ENCODE measurements at regions of chr7 and their contacts with region 1.

Region 1: GRCh38 chr7:5083311-5083711 is 37.7 kb downstream of the RBAK start:
- DNase-seq: no peak
- ATAC-seq: no peak
- H3K4me3 ChIP-seq: no peak overlapping the region
- H3K27ac ChIP-seq: no peak overlapping the region
- H3K4me1 ChIP-seq: no peaks in the 10 kb centered on the region
- H3K27me3 ChIP-seq: peaks cover 0 to 6% (median 4%) of the 10 kb centered on the region in 3 donors
- CTCF ChIP-seq: no peak
- POLR2A ChIP-seq: no peak

Region 2: DNA sequence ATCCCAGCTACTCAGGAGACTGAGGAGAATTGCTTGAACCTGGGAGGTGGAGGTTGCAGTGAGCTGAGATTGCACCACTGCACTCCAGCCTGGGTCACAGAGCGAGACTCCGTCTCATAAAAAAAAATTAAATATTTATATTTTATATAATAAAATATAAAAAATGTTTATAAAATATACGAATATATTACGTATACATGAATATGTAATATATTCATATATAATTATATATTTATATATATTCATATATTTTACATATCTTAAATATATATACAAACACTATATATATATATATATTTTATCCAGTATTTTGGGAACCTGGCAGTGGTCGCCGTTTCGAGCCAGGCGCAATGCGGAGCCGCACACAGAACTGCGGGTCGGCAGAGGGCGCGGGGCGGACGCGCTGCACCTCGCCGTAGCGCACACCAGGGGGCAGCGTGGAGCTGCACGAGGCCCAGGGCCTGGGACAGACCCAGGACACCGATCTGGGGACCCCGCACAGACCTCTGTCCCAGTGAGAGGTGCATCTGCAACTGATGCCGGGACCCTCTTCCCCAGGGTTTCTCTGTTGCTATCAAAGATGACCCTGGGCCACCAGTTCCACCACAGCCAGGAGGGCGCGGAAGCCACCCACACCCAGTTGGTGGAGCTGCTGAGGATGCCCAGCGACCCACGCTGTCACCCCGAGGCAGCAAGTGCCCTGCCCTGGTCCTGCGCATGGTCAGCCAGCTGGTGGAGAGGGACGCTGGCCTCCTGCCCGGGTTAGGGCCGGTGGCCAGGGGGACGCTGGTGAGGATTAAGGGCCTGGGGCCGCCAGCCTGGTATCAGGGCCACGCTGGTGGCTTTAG is 285.2 kb before region 1 on chr7:
- in situ Hi-C with region 1: loop called in 1 of 4 experiments (anchors 10 kb)
- intact Hi-C with region 1: loop called (anchors 10 kb)
- DNase-seq: no peak
- ATAC-seq: peak; percentile 62 to 73
- H3K4me3 ChIP-seq: no peak overlapping the region
- H3K27ac ChIP-seq: no peak overlapping the region
- H3K4me1 ChIP-seq: peaks cover 0 to 9% of the 10 kb centered on the region in 2 donors
- H3K27me3 ChIP-seq: no peaks in the 10 kb centered on the region
- CTCF ChIP-seq: peak; percentile 54 to 88 (median 83)
- POLR2A ChIP-seq: no peak

Region 3: GRCh38 chr7:4809091-4809591 is 274.2 kb before region 1 on chr7:
- in situ Hi-C with region 1: loop called in 1 of 4 experiments (anchors 10 kb)
- intact Hi-C with region 1: no loop called
- DNase-seq: no peak
- ATAC-seq: peak; percentile 33
- H3K4me3 ChIP-seq: peak overlapping the region in 1 of 4 donors; percentile 20
- H3K27ac ChIP-seq: peak overlapping the region; percentile 45 to 67 (median 62)
- H3K4me1 ChIP-seq: no peaks in the 10 kb centered on the region
- H3K27me3 ChIP-seq: no peaks in the 10 kb centered on the region
- CTCF ChIP-seq: no peak
- POLR2A ChIP-seq: no peak

Region 4: GRCh38 chr7:4958477-4959301 is 124.6 kb before region 1 on chr7 and contains the start of gene MMD2:
- in situ Hi-C with region 1: no loop called
- intact Hi-C with region 1: no loop called
- DNase-seq: no peak
- ATAC-seq: no peak
- H3K4me3 ChIP-seq: peak within 1 kb of the TSS; percentile 33 to 51 (median 39)
- H3K27ac ChIP-seq: no peak within 1 kb of the TSS
- H3K4me1 ChIP-seq: no peaks in the 10 kb centered on the region
- H3K27me3 ChIP-seq: peaks cover 24 to 49% (median 42%) of the 10 kb centered on the region in 3 donors
- CTCF ChIP-seq: no peak
- POLR2A ChIP-seq: no peak
- total RNA-seq, gene MMD2: not detected

Region 5: DNA sequence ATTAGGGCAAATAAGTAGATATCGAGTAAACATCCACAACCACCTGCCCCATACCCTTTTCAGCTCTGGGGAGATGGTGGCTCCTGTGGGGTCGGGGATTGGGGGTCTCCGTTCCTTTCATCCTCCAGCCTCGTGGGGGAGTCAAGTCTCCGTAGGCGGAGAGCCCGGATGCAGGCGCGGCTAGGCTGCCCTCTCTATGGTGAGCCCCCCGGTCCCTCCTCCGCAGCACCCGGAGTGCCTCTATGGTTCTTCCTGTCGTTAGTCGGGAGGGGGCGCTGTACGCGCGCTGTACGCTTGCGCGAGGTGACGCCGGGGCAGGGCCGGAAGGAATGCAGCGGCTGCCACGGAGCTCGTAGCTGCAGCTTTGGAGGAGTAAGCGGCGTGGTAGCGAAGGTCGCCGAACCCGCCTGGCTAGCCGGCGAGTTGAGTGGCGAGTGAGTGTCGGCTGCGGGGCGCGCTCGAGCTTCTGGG is 109.5 kb before region 1 on chr7:
- in situ Hi-C with region 1: no loop called
- intact Hi-C with region 1: loop called (anchors 10 kb)
- DNase-seq: peak; percentile 62 to 71
- ATAC-seq: peak; percentile 94
- H3K4me3 ChIP-seq: peak overlapping the region; percentile 55 to 82 (median 77)
- H3K27ac ChIP-seq: peak overlapping the region; percentile 72 to 90 (median 82)
- H3K4me1 ChIP-seq: peaks cover 0 to 4% of the 10 kb centered on the region in 2 donors
- H3K27me3 ChIP-seq: no peaks in the 10 kb centered on the region
- CTCF ChIP-seq: peak; percentile 61 to 80 (median 69)
- POLR2A ChIP-seq: peak; percentile 38 to 43

Region 6: GRCh38 chr7:5231811-5232484 is 148.6 kb after region 1 on chr7:
- in situ Hi-C with region 1: no loop called
- intact Hi-C with region 1: no loop called
- DNase-seq: no peak
- ATAC-seq: no peak
- H3K4me3 ChIP-seq: no peak overlapping the region
- H3K27ac ChIP-seq: no peak overlapping the region
- H3K4me1 ChIP-seq: no peaks in the 10 kb centered on the region
- H3K27me3 ChIP-seq: no peaks in the 10 kb centered on the region
- CTCF ChIP-seq: no peak
- POLR2A ChIP-seq: no peak

Measured in gastrocnemius medialis (tissue), 4 donors.